PC-9 (cell line): ENCODE measurements at regions of chr2 and their contacts with region 1.

Region 1: DNA sequence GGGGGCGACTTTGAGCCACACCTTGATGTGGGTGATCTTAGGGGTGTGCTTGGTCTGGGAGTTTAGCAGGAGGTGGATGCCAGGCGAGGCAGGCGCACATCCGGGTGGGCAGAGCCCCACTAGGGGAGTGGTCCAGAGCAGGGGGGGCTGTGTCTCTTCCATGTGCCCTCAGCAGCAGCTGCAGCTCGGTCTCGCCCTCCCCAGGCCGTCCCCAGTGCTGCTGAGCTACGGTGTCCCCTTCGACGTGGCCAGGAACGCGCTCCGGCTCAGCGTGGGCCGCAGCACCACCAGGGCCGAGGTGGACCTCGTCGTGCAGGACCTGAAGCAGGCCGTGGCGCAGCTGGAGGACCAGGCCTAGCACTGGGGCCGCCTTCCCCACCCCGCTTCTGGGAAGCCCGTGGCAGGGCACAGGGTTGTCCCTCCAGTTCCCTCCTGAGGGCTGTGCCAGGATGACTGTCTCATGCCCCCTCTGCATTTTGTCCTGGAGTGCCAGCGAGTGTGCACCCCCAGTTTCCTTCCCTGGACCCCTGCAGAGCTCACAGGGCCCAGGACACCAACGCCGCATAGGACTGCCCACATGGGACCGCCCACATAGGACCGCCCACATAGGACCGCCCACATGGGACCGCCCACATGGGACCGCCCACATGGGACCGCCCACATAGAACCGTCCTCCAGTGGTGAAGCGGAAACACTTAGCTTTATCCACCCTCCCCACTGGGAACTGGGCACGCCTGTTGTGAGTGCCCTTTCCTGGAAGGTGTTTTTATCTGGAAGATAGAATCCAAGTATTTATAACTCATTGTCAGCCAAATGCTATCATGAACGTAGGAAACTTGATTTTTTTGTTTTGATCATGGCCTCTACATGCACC is 1.9 kb upstream of the ESPNL start:
- DNase-seq: peak; percentile 72 to 88
- H3K4me3 ChIP-seq: no peak overlapping the region
- H3K27ac ChIP-seq: no peak overlapping the region
- H3K4me1 ChIP-seq: peaks cover 10% of the 10 kb centered on the region
- H3K27me3 ChIP-seq: no peaks in the 10 kb centered on the region
- CTCF ChIP-seq: no peak

Region 2: GRCh38 chr2:237833546-237833945 is 264.7 kb before region 1 on chr2:
- CTCF ChIA-PET with region 1: interaction called, 11 read pairs
- POLR2A ChIA-PET with region 1: interaction called, 5 read pairs
- intact Hi-C with region 1: no loop called
- DNase-seq: no peak
- H3K4me3 ChIP-seq: no peak overlapping the region
- H3K27ac ChIP-seq: no peak overlapping the region
- H3K4me1 ChIP-seq: no peaks in the 10 kb centered on the region
- H3K27me3 ChIP-seq: no peaks in the 10 kb centered on the region
- CTCF ChIP-seq: no peak

Region 3: GRCh38 chr2:238060542-238061314 is 37.5 kb before region 1 on chr2 and contains the start of gene SCLY:
- CTCF ChIA-PET with region 1: interaction called, 10 read pairs
- POLR2A ChIA-PET with region 1: no interaction called
- intact Hi-C with region 1: no loop called
- DNase-seq: peak; percentile 95 to 99
- H3K4me3 ChIP-seq: peak within 1 kb of the TSS; percentile 98
- H3K27ac ChIP-seq: peak within 1 kb of the TSS; percentile 67
- H3K4me1 ChIP-seq: peaks cover 17% of the 10 kb centered on the region
- H3K27me3 ChIP-seq: no peaks in the 10 kb centered on the region
- CTCF ChIP-seq: no peak; the same call in 1 of the 2 replicates
- total RNA-seq, gene SCLY: 33.9 and 40.0 TPM in 2 replicates

Region 4: DNA sequence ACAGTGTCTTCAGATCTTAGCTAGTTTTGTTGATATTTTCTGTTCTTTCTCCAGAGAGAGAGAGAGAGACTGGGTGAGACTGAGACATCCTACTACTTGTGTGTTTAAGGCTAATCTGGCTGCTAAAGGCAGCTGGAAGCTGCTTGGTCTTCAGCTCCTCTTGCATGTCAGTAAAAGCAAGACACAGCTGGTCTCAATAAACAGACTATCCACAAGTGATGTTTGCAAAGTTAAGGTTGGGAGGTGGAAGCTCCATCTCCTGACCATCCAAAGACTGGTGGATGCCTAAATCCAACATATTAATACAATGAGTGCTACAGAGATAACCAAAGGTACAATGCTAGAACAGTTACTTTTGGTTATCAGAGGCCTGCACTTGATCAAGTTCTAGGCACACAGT is 78.4 kb after region 1 on chr2:
- CTCF ChIA-PET with region 1: interaction called, 10 read pairs
- POLR2A ChIA-PET with region 1: no interaction called
- intact Hi-C with region 1: no loop called
- DNase-seq: no peak
- H3K4me3 ChIP-seq: no peak overlapping the region
- H3K27ac ChIP-seq: no peak overlapping the region
- H3K4me1 ChIP-seq: no peaks in the 10 kb centered on the region
- H3K27me3 ChIP-seq: no peaks in the 10 kb centered on the region
- CTCF ChIP-seq: no peak

Region 5: DNA sequence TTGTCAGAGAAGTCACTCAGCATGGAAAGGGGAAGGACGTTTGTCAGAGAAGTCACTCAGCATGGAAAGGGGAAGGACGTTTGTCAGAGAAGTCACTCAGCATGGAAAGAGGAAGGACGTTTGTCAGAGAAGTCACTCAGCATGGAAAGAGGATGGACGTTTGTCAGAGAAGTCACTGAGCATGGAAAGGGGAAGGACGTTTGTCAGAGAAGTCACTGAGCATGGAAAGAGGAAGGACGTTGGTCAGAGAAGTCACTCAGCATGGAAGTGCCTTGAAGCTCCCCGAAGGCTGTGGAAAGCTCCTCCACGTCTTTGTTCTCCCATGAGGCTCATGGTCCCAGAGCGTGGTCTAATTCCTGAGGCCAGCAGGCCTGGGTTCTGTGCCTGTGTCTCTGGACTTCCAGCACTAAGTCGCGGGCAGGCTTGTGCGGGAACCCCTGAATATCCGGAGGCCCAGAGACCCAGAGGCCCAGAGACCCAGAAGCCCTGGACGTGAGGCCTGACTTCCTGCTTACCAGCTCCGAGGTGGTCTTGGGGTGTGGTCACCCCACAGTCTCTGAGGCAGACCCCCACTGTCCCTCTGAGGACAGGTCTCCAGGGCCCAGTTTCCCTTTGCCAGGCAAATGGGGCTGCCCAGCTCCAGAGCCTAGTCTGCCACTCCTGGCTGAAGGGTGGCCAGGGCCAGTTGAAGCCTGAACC is 679.3 kb after region 1 on chr2:
- CTCF ChIA-PET with region 1: no interaction called
- POLR2A ChIA-PET with region 1: interaction called, 13 read pairs
- intact Hi-C with region 1: no loop called
- DNase-seq: no peak
- H3K4me3 ChIP-seq: no peak overlapping the region
- H3K27ac ChIP-seq: no peak overlapping the region
- H3K4me1 ChIP-seq: no peaks in the 10 kb centered on the region
- H3K27me3 ChIP-seq: peaks cover 88% of the 10 kb centered on the region
- CTCF ChIP-seq: no peak